ENCODE measurements at regions of chr11 and their contacts with region 1.

Region 1: GRCh38 chr11:12274558-12275197 is 102.7 kb upstream of the PARVA start:
- DNase-seq: no peak
- ATAC-seq: no peak
- H3K4me3 ChIP-seq: no peak overlapping the region
- H3K27ac ChIP-seq: no peak overlapping the region
- H3K4me1 ChIP-seq: peaks cover 5% of the 10 kb centered on the region
- H3K27me3 ChIP-seq: no peaks in the 10 kb centered on the region
- CTCF ChIP-seq: no peak

Region 2: GRCh38 chr11:11798586-11799438 is 475.9 kb before region 1 on chr11:
- intact Hi-C with region 1: loop called (anchors 10 kb)
- DNase-seq: peak; percentile 89
- ATAC-seq: peak; percentile 97
- H3K4me3 ChIP-seq: no peak overlapping the region
- H3K27ac ChIP-seq: no peak overlapping the region
- H3K4me1 ChIP-seq: peaks cover 3% of the 10 kb centered on the region
- H3K27me3 ChIP-seq: no peaks in the 10 kb centered on the region
- CTCF ChIP-seq: peak; percentile 97

Region 3: GRCh38 chr11:12318791-12319438 is 44.2 kb after region 1 on chr11:
- intact Hi-C with region 1: no loop called
- DNase-seq: no peak
- ATAC-seq: no peak
- H3K4me3 ChIP-seq: no peak overlapping the region
- H3K27ac ChIP-seq: no peak overlapping the region
- H3K4me1 ChIP-seq: peaks cover 9% of the 10 kb centered on the region
- H3K27me3 ChIP-seq: no peaks in the 10 kb centered on the region
- CTCF ChIP-seq: no peak

Region 4: DNA sequence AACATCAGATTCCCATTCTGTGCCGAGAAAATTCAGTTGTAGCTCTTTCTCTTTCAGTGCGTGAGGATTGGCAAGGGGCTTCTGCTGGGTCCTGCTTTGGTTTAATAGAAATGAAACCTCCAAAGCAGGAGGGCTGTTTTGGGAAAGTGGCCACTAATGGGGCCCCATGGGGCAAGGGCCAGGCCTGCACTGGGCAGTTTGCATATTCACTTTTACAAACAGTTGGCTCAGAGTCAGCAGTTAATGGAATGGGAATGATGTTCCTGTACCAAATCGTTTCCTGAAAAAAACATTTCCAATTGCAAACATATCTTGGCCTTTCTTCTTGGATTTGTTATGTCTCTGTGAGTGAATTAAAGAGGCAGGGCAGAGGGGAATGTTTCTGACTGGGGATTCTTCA is 194.8 kb after region 1 on chr11:
- intact Hi-C with region 1: no loop called
- DNase-seq: no peak
- ATAC-seq: no peak
- H3K4me3 ChIP-seq: no peak overlapping the region
- H3K27ac ChIP-seq: no peak overlapping the region
- H3K4me1 ChIP-seq: peaks cover 9% of the 10 kb centered on the region
- H3K27me3 ChIP-seq: no peaks in the 10 kb centered on the region
- CTCF ChIP-seq: no peak